Left ventricle myocardium inferior (tissue), 1 donor: ENCODE measurements at regions of chr11 and their contacts with region 1.

Region 1: GRCh38 chr11:96342961-96343711 is at the start of gene MAML2:
- DNase-seq: peak; percentile 92
- H3K4me3 ChIP-seq: peak within 1 kb of the TSS; percentile 76
- H3K27ac ChIP-seq: peak within 1 kb of the TSS; percentile 82
- H3K4me1 ChIP-seq: peaks cover 48% of the 10 kb centered on the region
- H3K27me3 ChIP-seq: no peaks in the 10 kb centered on the region
- CTCF ChIP-seq: peak; percentile 99
- total RNA-seq, gene MAML2: 4.5 TPM

Region 2: DNA sequence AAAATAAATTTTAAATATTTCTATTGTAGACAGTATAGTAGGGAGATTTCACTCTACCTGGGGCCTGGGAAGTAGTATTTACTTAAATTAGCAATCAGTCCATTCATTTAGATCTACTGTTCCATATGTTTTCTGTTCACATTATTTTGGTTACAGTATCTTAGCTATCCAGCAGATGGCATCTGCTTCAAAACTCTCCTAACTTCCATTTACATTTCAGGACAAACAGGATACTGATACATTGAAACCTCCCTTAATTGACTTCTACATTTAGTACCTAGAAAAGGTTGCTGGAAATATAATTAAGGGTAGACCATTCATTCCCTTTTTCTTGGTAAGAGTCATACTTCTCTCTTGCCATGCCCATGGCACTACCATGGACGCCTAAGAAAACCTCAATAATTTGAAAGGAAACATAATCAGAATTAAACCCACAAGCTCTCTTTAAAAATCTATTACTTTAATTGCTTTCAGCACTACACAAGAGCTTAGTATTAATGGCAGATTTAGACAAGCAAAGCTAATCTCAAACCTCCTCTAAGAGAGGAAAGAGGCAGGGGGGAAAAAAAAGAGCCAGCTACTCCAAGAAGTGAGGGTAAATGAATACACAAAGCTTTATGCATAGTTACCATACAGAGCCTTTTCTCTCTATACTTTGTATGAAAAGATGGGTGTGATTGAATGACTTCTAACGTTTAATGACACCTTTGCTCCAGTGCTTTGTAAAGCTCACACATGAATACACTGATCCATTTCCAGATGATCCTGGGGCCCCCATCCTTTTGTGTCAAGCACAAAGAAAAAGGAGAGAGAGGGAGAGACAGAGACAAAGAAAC is 288.0 kb before region 1 on chr11:
- intact Hi-C with region 1: loop called (anchors 2 kb)
- DNase-seq: no peak
- H3K4me3 ChIP-seq: no peak overlapping the region
- H3K27ac ChIP-seq: no peak overlapping the region
- H3K4me1 ChIP-seq: peaks cover 34% of the 10 kb centered on the region
- H3K27me3 ChIP-seq: no peaks in the 10 kb centered on the region
- CTCF ChIP-seq: peak; percentile 77